ENCODE measurements at regions of chr1 and their contacts with region 1.

Region 1: GRCh38 chr1:111275079-111275478 is 15.6 kb upstream of the CHIA start:
- DNase-seq: no peak
- H3K4me3 ChIP-seq: no peak overlapping the region
- H3K4me1 ChIP-seq: peaks cover 19% of the 10 kb centered on the region
- H3K27me3 ChIP-seq: no peaks in the 10 kb centered on the region

Region 2: GRCh38 chr1:111045033-111045722 is 229.9 kb before region 1 on chr1:
- in situ Hi-C with region 1: no loop called
- DNase-seq: no peak
- H3K4me3 ChIP-seq: no peak overlapping the region
- H3K4me1 ChIP-seq: no peaks in the 10 kb centered on the region
- H3K27me3 ChIP-seq: no peaks in the 10 kb centered on the region

Region 3: DNA sequence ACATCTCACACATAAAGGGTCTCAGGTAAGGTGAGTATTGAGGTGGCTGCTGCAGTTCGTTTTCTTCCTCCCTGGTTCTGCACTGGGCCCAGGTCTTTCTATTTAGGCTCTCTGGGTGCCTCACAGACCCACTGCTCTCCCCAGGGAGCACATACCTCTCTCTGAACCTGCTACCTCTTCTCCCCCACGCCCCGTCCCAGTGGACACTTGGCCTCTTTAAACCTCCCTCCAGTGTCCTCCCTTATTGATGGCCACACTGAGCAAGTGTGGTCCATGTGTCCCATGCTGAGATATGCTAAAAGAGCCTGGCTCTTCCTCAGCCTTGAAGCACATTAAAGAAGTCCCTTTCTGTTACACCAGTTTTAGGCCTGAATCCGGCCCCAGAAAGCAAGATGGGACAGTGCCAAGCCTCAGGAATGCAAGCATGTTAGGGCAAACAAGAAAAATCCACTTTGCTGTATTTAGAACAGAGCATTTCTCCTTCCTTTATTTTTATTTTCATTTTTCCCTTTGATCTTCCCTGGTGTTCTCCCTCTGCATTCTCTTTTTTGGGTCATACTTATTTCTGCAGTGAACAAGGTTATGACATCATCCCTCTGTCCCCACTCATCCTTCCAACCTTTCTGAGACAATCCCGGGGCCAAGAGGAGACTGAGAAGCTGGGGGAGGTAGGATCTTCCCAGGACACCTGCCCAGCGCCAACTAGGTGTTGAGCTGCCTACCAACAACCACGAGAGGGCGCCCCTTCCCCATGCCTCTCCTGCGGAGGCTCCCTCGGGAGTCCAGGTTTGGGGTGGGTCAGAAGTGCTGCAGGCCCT is 52.6 kb before region 1 on chr1:
- in situ Hi-C with region 1: no loop called
- DNase-seq: peak; percentile 75 to 95
- H3K4me3 ChIP-seq: no peak overlapping the region
- H3K4me1 ChIP-seq: peaks cover 24% of the 10 kb centered on the region
- H3K27me3 ChIP-seq: no peaks in the 10 kb centered on the region

Region 4: DNA sequence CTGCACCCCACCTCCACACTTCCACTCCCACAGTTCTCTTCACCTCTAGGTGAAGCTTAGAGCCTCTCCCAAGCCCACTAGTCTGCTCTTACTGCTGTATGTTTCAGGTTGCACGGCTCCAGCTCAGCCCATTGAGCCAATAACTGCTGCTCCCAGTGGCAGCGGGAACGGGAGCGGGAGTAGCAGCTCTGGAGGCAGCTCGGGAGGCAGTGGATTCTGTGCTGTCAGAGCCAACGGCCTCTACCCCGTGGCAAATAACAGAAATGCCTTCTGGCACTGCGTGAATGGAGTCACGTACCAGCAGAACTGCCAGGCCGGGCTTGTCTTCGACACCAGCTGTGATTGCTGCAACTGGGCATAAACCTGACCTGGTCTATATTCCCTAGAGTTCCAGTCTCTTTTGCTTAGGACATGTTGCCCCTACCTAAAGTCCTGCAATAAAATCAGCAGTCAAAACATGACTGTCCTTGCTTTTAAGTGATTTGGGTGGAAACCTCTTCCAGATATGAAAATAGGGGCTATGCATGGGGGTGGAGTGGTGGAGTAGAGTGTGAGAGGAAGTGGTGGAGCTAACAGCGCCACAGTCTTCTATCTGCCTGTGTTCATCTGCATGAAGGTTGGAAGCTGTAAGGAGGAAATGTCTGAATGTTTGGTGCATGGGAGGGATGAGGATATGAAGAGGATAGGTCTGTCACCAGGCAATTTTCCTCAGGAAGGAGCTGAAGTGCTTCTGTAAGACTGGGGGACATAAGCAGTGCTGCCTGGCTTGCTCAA is 45.2 kb after region 1 on chr1:
- in situ Hi-C with region 1: loop called (anchors 10 kb)
- DNase-seq: peak in 1 of 2 experiments; percentile 38
- H3K4me3 ChIP-seq: no peak overlapping the region
- H3K4me1 ChIP-seq: peaks cover 19% of the 10 kb centered on the region
- H3K27me3 ChIP-seq: no peaks in the 10 kb centered on the region

Region 5: GRCh38 chr1:111789666-111790316 is 514.7 kb after region 1 on chr1:
- in situ Hi-C with region 1: no loop called
- DNase-seq: no peak
- H3K4me3 ChIP-seq: no peak overlapping the region
- H3K4me1 ChIP-seq: peaks cover 14% of the 10 kb centered on the region
- H3K27me3 ChIP-seq: no peaks in the 10 kb centered on the region

Measured in HAP-1 (cell line).